Activated naive CD4-positive, alpha-beta T cell treated with anti-CD3 and anti-CD28 coated beads for 36 hours (primary cell): ENCODE measurements at regions of chr2 and their contacts with region 1.

Region 1: GRCh38 chr2:189762551-189763298 is at the start of gene OSGEPL1:
- DNase-seq: peak; percentile 95
- H3K4me3 Mint-ChIP-seq: peak within 1 kb of the TSS; percentile 92
- H3K27ac Mint-ChIP-seq: peak within 1 kb of the TSS; percentile 97
- H3K4me1 Mint-ChIP-seq: peaks cover 13% of the 10 kb centered on the region
- H3K27me3 Mint-ChIP-seq: no peaks in the 10 kb centered on the region
- total RNA-seq, gene OSGEPL1: 15.5 to 15.8 TPM

Region 2: DNA sequence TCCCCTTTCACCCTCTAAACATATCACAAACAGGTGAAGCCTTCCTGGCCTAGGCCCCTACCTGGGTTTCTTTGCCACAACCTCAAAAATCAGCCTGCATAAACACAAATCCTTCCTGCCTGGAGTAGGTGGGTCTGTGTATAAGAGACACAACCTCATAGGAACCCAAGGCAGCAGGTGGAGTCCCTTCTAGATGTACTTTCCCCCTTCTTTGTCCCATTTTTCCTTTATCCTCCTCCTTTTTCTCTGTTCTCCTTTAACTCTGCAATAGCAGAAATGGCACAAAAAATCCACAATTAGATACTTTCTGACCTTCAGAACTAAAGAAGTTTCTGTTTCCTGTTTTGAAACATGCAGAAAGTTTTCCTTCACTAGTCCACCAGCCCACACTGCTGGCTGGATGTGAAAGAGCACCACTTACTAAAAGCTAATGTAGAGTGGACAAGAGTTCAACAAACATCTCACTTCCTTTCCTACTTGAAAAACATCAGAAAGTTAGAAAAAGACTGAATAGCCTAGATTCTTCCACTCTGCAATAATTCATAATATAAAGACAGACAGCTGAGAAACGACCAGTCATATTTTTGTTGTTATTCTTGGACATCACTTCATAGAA is 193.3 kb before region 1 on chr2:
- CTCF ChIA-PET with region 1: no interaction called
- intact Hi-C with region 1: no loop called
- DNase-seq: no peak
- H3K4me3 Mint-ChIP-seq: peak overlapping the region; percentile 16
- H3K27ac Mint-ChIP-seq: peak overlapping the region; percentile 78
- H3K4me1 Mint-ChIP-seq: peaks cover 37% of the 10 kb centered on the region
- H3K27me3 Mint-ChIP-seq: no peaks in the 10 kb centered on the region

Region 3: GRCh38 chr2:189580658-189581353 is 181.9 kb before region 1 on chr2 and contains the start of gene SLC40A1:
- CTCF ChIA-PET with region 1: no interaction called
- intact Hi-C with region 1: loop called (anchors 2 kb)
- DNase-seq: peak; percentile 67
- H3K4me3 Mint-ChIP-seq: peak within 1 kb of the TSS; percentile 85
- H3K27ac Mint-ChIP-seq: peak within 1 kb of the TSS; percentile 82
- H3K4me1 Mint-ChIP-seq: peaks cover 44% of the 10 kb centered on the region
- H3K27me3 Mint-ChIP-seq: peaks cover 5% of the 10 kb centered on the region
- total RNA-seq, gene SLC40A1: 3.8 to 4.1 TPM

Region 4: GRCh38 chr2:189674374-189675112 is 88.2 kb before region 1 on chr2 and contains the start of gene ANKAR:
- CTCF ChIA-PET with region 1: interaction called, 13 read pairs
- intact Hi-C with region 1: loop called (anchors 1 kb)
- DNase-seq: peak; percentile 78
- H3K4me3 Mint-ChIP-seq: peak within 1 kb of the TSS; percentile 89
- H3K27ac Mint-ChIP-seq: peak within 1 kb of the TSS; percentile 94
- H3K4me1 Mint-ChIP-seq: peaks cover 35% of the 10 kb centered on the region
- H3K27me3 Mint-ChIP-seq: no peaks in the 10 kb centered on the region
- total RNA-seq, gene ANKAR: 1.6 to 2.5 TPM

Region 5: DNA sequence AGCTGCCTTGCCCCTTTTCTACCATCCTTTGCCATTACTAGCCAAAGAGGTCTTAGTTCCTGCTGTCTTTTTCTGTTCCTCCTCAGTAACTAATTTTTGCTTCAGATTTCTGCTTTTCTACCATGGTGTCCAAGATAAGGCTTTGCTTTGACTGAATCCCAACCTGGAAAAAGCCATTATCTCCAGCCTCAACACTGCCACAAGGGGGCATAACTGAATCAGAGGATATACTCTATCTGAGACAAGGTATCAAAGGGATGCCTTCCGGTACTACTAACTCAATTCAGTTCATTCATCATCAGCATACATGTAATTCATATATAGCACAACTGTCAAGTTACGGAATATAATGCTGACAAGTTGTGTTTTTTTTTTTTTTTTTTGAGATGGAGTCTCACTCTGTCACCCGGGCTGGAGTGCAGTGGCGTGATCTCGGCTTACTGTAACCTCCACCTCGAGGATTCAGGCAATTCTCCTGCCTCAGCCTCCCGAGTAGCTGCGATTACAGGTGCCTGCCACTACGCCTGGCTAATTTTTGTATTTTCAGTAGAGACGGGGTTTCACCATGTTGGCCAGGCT is 11.6 kb before region 1 on chr2:
- CTCF ChIA-PET with region 1: interaction called, 33 read pairs
- intact Hi-C with region 1: loop called (anchors 1 kb)
- DNase-seq: peak; percentile 59
- H3K4me3 Mint-ChIP-seq: no peak overlapping the region
- H3K27ac Mint-ChIP-seq: no peak overlapping the region
- H3K4me1 Mint-ChIP-seq: no peaks in the 10 kb centered on the region
- H3K27me3 Mint-ChIP-seq: no peaks in the 10 kb centered on the region

Region 6: DNA sequence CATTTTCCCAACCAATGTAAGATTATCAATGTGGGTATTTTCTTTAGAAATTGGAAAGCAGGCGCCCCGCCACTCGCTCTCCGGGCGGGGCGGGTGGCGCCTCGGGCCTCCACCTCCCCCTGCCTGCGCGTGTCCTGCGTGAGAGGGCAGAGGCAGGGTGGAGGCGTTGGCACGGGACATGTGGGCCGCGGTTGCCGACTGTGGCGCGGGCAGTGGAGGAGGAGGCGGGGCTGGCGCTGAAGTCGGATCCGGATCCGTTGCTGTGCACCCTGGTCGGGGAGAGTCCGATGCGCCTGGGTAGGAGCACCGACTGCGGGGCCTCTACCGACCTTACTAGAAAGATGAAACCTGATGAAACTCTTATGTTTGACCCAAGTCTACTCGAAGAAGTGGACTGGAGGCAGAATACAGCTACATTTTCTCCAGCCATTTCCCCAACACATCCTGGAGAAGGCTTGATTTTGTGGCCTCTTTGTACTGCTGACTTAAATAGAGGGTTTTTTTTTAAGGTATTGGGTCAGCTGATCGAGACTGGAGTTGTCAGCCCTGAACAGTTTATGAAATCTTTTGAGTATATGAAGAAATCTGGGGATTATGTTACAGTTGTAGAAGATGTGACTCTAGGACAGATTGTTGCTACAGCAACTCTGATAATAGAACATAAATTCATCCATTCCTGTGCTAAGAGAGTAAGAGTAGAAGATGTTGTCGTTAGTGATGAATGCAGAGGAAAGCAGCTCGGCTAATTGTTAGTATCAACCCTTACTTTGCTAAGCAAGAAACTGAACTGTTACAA is 59.4 kb after region 1 on chr2:
- CTCF ChIA-PET with region 1: no interaction called
- intact Hi-C with region 1: no loop called
- DNase-seq: no peak
- H3K4me3 Mint-ChIP-seq: no peak overlapping the region
- H3K27ac Mint-ChIP-seq: no peak overlapping the region
- H3K4me1 Mint-ChIP-seq: peaks cover 22% of the 10 kb centered on the region
- H3K27me3 Mint-ChIP-seq: no peaks in the 10 kb centered on the region

Region 7: DNA sequence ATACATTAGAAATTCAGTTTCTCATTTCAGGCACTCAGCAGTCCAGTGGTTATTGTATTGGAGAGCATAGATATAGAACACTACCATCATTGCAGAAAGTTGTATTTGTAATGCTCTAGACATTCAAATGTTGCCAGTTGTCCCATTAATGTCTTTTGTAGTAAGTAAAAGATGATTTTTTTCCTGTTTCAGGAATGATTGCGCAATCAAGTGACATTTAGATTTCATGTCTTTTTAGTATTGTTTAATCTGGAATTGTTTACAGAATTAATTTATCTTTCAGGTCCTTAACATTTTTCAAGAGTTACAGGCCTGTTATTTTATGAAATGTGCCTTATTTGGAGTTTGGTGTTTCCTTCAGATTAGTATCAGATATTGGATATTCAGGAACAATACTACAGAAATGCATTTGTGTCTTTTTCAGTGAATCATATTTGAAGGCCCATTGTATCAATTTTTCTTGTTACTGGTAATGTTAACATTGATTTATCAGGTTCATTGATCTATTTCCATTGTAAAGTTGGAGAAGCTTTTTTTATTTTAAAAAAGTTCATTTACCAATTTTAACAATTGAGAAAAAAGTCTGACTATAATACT is 165.2 kb after region 1 on chr2:
- CTCF ChIA-PET with region 1: interaction called, 10 read pairs
- intact Hi-C with region 1: no loop called
- DNase-seq: no peak
- H3K4me3 Mint-ChIP-seq: no peak overlapping the region
- H3K27ac Mint-ChIP-seq: no peak overlapping the region
- H3K4me1 Mint-ChIP-seq: no peaks in the 10 kb centered on the region
- H3K27me3 Mint-ChIP-seq: peaks cover 5% of the 10 kb centered on the region